ENCODE measurements at regions of chr9 and their contacts with region 1.

Region 1: DNA sequence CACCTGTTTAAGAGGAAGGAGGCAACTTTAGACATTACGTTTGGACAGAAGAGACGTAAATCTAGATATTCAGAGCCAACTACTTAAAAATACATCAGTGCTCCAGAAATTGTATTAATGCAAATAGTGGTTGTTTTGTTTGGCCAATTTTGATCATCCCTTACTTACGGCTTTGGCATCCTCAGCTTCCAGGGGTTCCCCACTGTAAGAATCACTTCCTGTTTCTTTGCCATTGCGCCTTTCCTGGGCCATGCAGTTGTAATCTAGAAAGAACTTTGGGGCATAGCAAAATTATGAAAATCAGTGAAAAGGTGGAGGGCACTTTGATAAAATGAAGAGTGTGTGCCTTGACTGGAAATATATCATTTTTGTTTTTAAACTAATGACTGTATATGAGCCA is 537.2 kb upstream of the TLE4 start:
- DNase-seq: no peak
- H3K4me3 ChIP-seq: no peak overlapping the region
- H3K4me3 Mint-ChIP-seq: no peak overlapping the region
- H3K27ac ChIP-seq: no peak overlapping the region
- H3K27ac Mint-ChIP-seq: no peak overlapping the region
- H3K4me1 ChIP-seq: no peaks in the 10 kb centered on the region
- H3K4me1 Mint-ChIP-seq: no peaks in the 10 kb centered on the region
- H3K27me3 ChIP-seq: no peaks in the 10 kb centered on the region
- H3K27me3 Mint-ChIP-seq: peaks cover 0 to 4% (median 3%) of the 10 kb centered on the region in 3 donors
- CTCF ChIP-seq: no peak

Region 2: GRCh38 chr9:78839252-78839651 is 195.3 kb before region 1 on chr9:
- intact Hi-C with region 1: no loop called
- DNase-seq: no peak
- H3K4me3 ChIP-seq: no peak overlapping the region
- H3K4me3 Mint-ChIP-seq: no peak overlapping the region
- H3K27ac ChIP-seq: no peak overlapping the region
- H3K27ac Mint-ChIP-seq: no peak overlapping the region
- H3K4me1 ChIP-seq: no peaks in the 10 kb centered on the region
- H3K4me1 Mint-ChIP-seq: no peaks in the 10 kb centered on the region
- H3K27me3 ChIP-seq: no peaks in the 10 kb centered on the region
- H3K27me3 Mint-ChIP-seq: no peaks in the 10 kb centered on the region
- CTCF ChIP-seq: no peak

Region 3: DNA sequence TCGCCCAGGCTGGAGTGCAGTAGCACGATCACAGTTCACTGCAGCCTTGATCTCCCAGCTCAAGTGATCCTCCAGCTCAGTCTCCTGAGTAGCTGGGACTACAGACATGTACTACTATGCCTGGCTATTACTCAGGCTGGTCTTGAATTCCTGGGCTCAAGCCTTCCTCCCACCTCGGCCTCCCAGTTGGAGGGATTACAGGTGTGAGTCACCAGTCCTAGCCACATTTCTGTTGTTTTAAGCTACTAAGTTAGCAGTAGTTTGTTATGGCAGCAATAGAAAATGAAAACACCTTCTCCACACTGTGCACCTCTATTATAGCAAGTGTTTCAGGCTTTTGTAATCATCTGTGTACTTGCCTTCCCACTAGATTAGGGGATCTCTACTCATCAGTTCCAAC is 51.7 kb before region 1 on chr9:
- intact Hi-C with region 1: no loop called
- DNase-seq: no peak
- H3K4me3 ChIP-seq: no peak overlapping the region
- H3K4me3 Mint-ChIP-seq: no peak overlapping the region
- H3K27ac ChIP-seq: no peak overlapping the region
- H3K27ac Mint-ChIP-seq: no peak overlapping the region
- H3K4me1 ChIP-seq: no peaks in the 10 kb centered on the region
- H3K4me1 Mint-ChIP-seq: no peaks in the 10 kb centered on the region
- H3K27me3 ChIP-seq: no peaks in the 10 kb centered on the region
- H3K27me3 Mint-ChIP-seq: peaks cover 0 to 2% (median 0%) of the 10 kb centered on the region in 3 donors
- CTCF ChIP-seq: no peak

Region 4: DNA sequence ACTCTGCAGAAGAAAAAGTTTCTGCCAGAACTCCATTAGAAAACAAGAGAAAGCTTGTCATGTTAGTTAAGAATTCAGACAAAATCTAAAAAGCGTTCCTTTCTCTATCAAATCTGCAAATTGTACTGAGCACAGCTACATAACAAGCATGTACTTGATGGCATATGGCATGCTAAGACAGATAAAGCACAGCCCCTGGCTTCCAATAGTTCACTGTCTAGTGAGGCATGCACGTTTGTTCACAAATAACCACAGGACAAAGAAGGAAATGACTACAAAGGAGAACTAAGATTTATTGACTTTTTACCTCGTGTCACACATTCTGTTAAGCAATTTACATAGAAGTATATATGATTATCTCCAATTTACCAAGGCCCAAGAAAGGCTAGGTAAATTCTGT is 19.0 kb after region 1 on chr9:
- intact Hi-C with region 1: no loop called
- DNase-seq: no peak
- H3K4me3 ChIP-seq: no peak overlapping the region
- H3K4me3 Mint-ChIP-seq: no peak overlapping the region
- H3K27ac ChIP-seq: no peak overlapping the region
- H3K27ac Mint-ChIP-seq: no peak overlapping the region
- H3K4me1 ChIP-seq: no peaks in the 10 kb centered on the region
- H3K4me1 Mint-ChIP-seq: no peaks in the 10 kb centered on the region
- H3K27me3 ChIP-seq: no peaks in the 10 kb centered on the region
- H3K27me3 Mint-ChIP-seq: peaks cover 0 to 2% (median 0%) of the 10 kb centered on the region in 3 donors
- CTCF ChIP-seq: no peak

Region 5: GRCh38 chr9:80595192-80595591 is 1560.6 kb after region 1 on chr9:
- intact Hi-C with region 1: loop called in 1 of 2 experiments (anchors 10 kb)
- DNase-seq: no peak
- H3K4me3 ChIP-seq: no peak overlapping the region
- H3K4me3 Mint-ChIP-seq: no peak overlapping the region
- H3K27ac ChIP-seq: no peak overlapping the region
- H3K27ac Mint-ChIP-seq: no peak overlapping the region
- H3K4me1 ChIP-seq: no peaks in the 10 kb centered on the region
- H3K4me1 Mint-ChIP-seq: no peaks in the 10 kb centered on the region
- H3K27me3 ChIP-seq: no peaks in the 10 kb centered on the region
- H3K27me3 Mint-ChIP-seq: peaks cover 0 to 2% (median 0%) of the 10 kb centered on the region in 3 donors
- CTCF ChIP-seq: no peak